ENCODE measurements at regions of chr14 and their contacts with region 1.

Region 1: GRCh38 chr14:22791301-22791700 is 23.9 kb downstream of the SLC7A7 start:
- DNase-seq: no peak
- ATAC-seq: peak; percentile 20
- H3K4me3 ChIP-seq: no peak overlapping the region
- H3K27ac ChIP-seq: peak overlapping the region; percentile 71
- H3K4me1 ChIP-seq: peaks cover 46% of the 10 kb centered on the region
- H3K27me3 ChIP-seq: no peaks in the 10 kb centered on the region
- CTCF ChIP-seq: no peak
- EP300 ChIP-seq: no peak
- POLR2A ChIP-seq: no peak
- RAD21 ChIP-seq: no peak

Region 2: DNA sequence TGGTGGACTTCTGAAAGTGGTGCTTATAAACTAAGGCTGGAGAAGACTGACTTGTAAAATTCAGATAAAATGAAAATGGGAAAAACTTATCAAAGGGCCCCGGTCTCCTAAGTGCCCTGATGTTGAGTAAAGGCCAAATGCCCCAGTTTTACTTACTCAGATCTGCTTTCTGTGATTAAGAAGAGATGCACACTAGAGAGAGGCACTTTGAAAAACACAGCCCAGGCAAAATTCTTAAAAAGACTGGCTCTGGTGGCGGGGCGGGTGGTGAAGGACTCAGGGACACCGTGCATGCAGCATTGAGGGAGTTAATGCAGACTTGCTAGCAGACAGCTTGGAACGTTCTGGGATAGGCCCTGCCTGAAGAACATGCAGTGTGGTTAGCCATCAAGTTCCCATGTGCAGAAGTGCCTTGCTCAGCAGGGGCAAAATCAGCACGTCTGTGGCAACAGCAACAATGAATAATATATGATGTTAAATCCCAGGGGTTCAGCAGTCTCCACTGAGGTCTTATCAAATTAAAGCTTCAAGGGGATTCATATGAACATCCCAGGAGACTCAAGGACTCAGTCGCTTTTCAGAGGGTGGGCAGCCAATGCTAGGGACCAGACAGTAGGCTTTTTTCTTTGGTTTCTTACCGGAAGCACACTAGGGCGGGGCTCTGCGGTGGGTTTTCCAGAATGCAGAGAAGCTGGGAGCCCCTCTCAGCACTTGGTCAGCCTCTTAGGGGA is 307.3 kb before region 1 on chr14:
- CTCF ChIA-PET with region 1: no interaction called
- POLR2A ChIA-PET with region 1: no interaction called
- RAD21 ChIA-PET with region 1: no interaction called
- SMC1A ChIA-PET with region 1: no interaction called
- in situ Hi-C with region 1: no loop called
- intact Hi-C with region 1: loop called (anchors 10 kb)
- DNase-seq: no peak
- ATAC-seq: peak; percentile 39
- H3K4me3 ChIP-seq: peak overlapping the region; percentile 72
- H3K27ac ChIP-seq: peak overlapping the region; percentile 98
- H3K4me1 ChIP-seq: peaks cover 84% of the 10 kb centered on the region
- H3K27me3 ChIP-seq: no peaks in the 10 kb centered on the region
- CTCF ChIP-seq: no peak
- EP300 ChIP-seq: no peak
- POLR2A ChIP-seq: peak; percentile 52
- RAD21 ChIP-seq: no peak

Region 3: DNA sequence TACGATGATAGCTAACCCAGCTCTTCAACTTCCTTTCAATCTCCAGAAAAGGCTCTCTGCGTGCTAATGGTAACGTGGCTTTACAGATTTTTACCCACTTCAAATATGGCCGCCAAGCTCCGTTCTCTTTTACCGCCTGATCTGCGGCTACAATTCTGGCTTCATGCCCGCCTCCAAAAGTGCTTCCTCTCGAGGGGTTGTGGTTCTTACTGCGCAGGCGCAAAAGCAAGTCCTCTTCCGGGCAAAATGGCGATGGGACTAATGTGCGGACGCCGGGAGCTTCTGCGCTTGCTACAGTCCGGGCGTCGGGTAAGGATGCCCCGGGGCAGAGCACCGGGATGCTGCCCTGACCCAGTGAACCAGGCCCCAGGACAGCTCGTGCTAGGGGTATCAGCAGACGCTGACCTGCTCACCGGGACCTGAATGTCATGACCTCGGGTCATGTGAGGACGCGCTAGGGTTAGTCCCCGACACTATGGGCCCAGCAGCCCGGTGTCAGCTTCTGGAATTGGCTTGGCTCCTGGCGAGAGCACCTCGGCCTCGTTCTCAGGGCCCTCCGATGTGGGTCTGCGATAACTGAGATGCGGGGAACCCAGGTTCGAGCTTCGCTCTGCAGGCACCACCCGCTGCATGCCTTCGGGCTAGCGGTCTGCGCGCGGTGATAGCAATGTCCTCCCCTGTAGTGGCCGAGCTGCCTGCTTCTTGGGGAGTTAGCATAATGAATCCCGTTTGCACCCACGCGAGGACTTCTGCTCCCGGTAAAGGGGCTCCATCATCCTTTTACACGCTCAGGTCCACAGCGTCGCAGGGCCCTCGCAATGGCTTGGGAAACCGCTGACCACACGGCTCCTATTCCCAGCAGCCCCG is 24.6 kb before region 1 on chr14 and contains the start of gene OXA1L:
- CTCF ChIA-PET with region 1: no interaction called
- POLR2A ChIA-PET with region 1: interaction called, 5 read pairs
- RAD21 ChIA-PET with region 1: interaction called, 11 read pairs
- SMC1A ChIA-PET with region 1: interaction called, 8 read pairs
- in situ Hi-C with region 1: no loop called
- intact Hi-C with region 1: no loop called
- DNase-seq: peak; percentile 92
- ATAC-seq: peak; percentile 89
- H3K4me3 ChIP-seq: peak within 1 kb of the TSS; percentile 91
- H3K27ac ChIP-seq: peak within 1 kb of the TSS; percentile 98
- H3K4me1 ChIP-seq: no peaks in the 10 kb centered on the region; the same call in 1 of the 2 replicates
- H3K27me3 ChIP-seq: no peaks in the 10 kb centered on the region
- CTCF ChIP-seq: no peak
- EP300 ChIP-seq: no peak
- POLR2A ChIP-seq: peak; percentile 92
- RAD21 ChIP-seq: no peak
- polyA plus RNA-seq, gene OXA1L: 110 to 116 TPM

Region 4: GRCh38 chr14:22802860-22803686 is 11.8 kb after region 1 on chr14:
- CTCF ChIA-PET with region 1: interaction called, 26 read pairs
- POLR2A ChIA-PET with region 1: interaction called, 245 read pairs
- RAD21 ChIA-PET with region 1: interaction called, 219 read pairs
- SMC1A ChIA-PET with region 1: interaction called, 395 read pairs
- in situ Hi-C with region 1: no loop called
- intact Hi-C with region 1: no loop called
- DNase-seq: no peak
- ATAC-seq: peak; percentile 80
- H3K4me3 ChIP-seq: peak overlapping the region; percentile 61
- H3K27ac ChIP-seq: peak overlapping the region; percentile 98
- H3K4me1 ChIP-seq: peaks cover 58% of the 10 kb centered on the region
- H3K27me3 ChIP-seq: no peaks in the 10 kb centered on the region
- CTCF ChIP-seq: no peak
- EP300 ChIP-seq: 0 out of 4 replicates have a peak, but pooled peaks of 1 of the 2 experiments have one; percentile 11
- POLR2A ChIP-seq: no peak
- RAD21 ChIP-seq: no peak

Region 5: DNA sequence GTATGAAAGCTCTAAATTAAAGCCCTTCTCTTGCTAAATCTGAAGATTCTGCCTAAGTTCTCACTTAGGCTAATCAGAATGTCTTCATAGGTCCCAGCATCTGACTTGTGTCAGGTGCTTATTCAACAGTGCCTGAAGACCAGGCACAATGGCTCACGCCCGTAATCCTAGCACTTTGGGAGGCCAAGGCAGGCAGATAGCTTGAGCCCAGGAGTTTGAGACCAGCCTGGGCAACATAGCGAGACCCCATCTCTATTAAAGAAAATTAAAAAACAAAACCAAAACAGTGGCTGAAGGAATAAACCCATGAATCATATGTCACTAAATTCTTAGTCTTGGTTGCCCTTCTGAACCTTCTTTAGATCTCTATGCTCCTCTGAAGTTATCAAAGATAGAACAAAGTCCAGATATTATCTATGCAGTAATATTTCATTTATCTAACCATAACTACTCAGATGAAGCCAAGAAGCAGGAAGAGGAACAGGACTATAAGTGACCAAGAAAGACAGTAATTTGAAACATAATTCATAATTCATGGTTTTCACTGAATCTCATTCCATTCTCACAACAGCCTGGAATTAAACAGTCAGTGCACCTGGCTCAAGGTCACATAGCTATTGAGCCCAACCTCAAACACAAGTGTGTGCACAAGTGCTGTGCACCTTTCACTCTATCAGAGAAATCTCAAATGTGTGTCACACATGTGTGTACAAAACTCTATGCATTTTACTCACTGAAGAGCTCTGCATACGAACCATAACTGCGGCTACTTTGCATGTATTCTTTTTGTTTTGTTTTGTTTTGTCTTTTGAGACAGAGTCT is 17.3 kb after region 1 on chr14:
- CTCF ChIA-PET with region 1: interaction called, 37 read pairs
- POLR2A ChIA-PET with region 1: interaction called, 245 read pairs
- RAD21 ChIA-PET with region 1: interaction called, 219 read pairs
- SMC1A ChIA-PET with region 1: interaction called, 395 read pairs
- in situ Hi-C with region 1: no loop called
- intact Hi-C with region 1: loop called (anchors 2 kb)
- DNase-seq: no peak
- ATAC-seq: no peak
- H3K4me3 ChIP-seq: peak overlapping the region; percentile 13; the same call in 1 of the 2 replicates
- H3K27ac ChIP-seq: peak overlapping the region; percentile 30
- H3K4me1 ChIP-seq: peaks cover 43% of the 10 kb centered on the region
- H3K27me3 ChIP-seq: no peaks in the 10 kb centered on the region
- CTCF ChIP-seq: no peak
- EP300 ChIP-seq: no peak
- POLR2A ChIP-seq: no peak
- RAD21 ChIP-seq: no peak

Region 6: DNA sequence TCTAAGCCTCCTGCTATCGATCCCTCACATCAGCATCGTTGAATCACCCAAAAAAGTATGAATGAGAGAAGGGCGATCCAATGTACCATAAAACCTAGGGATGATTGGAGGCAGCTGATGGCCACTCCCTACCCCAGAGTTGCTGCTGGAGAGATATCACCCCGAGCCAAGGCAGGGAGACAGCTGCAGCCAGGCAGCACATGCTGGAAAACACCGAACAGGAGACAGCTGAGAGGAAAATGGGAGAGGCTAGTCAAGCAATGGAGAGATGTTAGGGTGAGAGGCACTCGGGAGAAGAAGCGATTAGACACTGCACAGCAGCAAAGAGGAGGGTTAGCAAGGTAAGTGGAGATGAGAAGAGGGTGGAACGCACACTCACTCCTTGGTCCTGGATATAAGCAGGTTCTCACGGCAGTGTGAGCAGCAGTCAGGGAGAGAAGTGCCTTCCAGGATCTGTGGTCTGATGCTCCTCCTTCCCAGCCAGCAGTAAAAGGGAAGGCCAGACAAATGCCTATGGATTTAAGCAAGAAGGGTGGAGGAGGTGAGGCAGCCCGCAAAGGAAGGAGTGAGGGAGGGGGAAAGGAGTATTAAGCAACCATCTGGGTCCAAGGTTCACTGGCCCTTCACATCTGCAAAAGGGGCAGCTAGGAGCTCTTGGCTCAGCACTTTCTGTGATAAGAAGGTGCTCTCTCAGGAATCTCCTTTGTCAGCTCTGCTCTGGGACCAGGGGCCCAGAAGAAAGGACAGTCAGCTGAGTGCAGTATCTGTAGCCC is 23.8 kb after region 1 on chr14 and contains the start of gene SLC7A7:
- CTCF ChIA-PET with region 1: interaction called, 37 read pairs
- POLR2A ChIA-PET with region 1: interaction called, 245 read pairs
- RAD21 ChIA-PET with region 1: interaction called, 219 read pairs
- SMC1A ChIA-PET with region 1: interaction called, 395 read pairs
- in situ Hi-C with region 1: no loop called
- intact Hi-C with region 1: loop called (anchors 2 kb)
- DNase-seq: no peak
- ATAC-seq: peak; percentile 6
- H3K4me3 ChIP-seq: peak within 1 kb of the TSS; percentile 66
- H3K27ac ChIP-seq: peak within 1 kb of the TSS; percentile 75
- H3K4me1 ChIP-seq: peaks cover 28% of the 10 kb centered on the region
- H3K27me3 ChIP-seq: no peaks in the 10 kb centered on the region
- CTCF ChIP-seq: no peak
- EP300 ChIP-seq: no peak
- POLR2A ChIP-seq: no peak
- RAD21 ChIP-seq: no peak
- polyA plus RNA-seq, gene SLC7A7: 48.1 to 72.7 TPM

Region 7: DNA sequence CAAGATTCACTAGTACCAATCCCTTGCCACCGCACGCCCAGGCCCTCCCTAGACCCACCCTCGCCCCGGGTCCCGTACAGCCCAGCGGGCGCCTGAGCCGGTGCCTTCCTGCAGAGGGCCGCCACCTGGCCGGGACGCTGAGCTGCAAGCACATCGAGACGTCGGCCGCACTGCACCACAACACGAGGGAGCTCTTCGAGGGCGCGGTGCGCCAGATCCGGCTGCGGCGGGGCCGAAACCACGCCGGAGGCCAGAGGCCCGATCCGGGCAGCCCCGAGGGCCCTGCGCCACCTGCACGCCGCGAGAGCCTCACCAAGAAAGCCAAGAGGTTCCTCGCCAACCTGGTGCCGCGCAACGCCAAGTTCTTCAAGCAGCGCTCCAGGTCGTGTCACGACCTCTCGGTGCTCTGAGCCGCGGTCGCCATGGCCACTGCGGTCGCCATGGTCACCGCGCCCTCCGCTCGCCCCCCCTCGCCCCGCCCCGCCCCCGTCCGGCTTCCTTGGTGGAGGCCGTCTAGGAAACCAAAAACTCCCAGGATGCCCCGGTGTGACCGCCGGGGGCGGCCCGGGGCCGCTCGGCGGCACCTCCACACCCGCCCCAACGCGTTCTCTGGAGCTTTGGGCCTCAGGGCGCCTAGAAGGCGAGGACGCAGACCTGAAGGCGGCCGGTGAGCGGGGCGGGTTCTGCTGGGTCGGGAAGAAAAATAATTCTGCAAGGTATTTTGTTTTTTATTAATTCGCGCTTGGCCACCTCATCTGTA is 95.4 kb after region 1 on chr14:
- CTCF ChIA-PET with region 1: interaction called, 3 read pairs
- POLR2A ChIA-PET with region 1: interaction called, 5 read pairs
- RAD21 ChIA-PET with region 1: interaction called, 16 read pairs
- SMC1A ChIA-PET with region 1: interaction called, 4 read pairs
- in situ Hi-C with region 1: no loop called
- intact Hi-C with region 1: no loop called
- DNase-seq: peak; percentile 45
- ATAC-seq: peak; percentile 72
- H3K4me3 ChIP-seq: peak overlapping the region; percentile 91
- H3K27ac ChIP-seq: peak overlapping the region; percentile 86
- H3K4me1 ChIP-seq: peaks cover 35% of the 10 kb centered on the region
- H3K27me3 ChIP-seq: no peaks in the 10 kb centered on the region
- CTCF ChIP-seq: peak; percentile 13 to 46 (median 18); a peak in 4 of 6 replicates
- EP300 ChIP-seq: no peak; a peak in 1 of 4 replicates
- POLR2A ChIP-seq: peak; percentile 79; the same call in 1 of the 2 replicates
- RAD21 ChIP-seq: no peak

Measured in GM12878 (cell line).